H1 (cell line): ENCODE measurements at regions of chr9 and their contacts with region 1.

Region 1: GRCh38 chr9:124357721-124358361 is 57.4 kb downstream of the PSMB7 start:
- DNase-seq: no peak
- H3K4me3 ChIP-seq: no peak overlapping the region
- H3K27ac ChIP-seq: no peak overlapping the region
- H3K4me1 ChIP-seq: no peaks in the 10 kb centered on the region
- H3K27me3 ChIP-seq: no peaks in the 10 kb centered on the region
- CTCF ChIP-seq: peak; percentile 38 to 54 (median 53)
- EP300 ChIP-seq: no peak
- POLR2A ChIP-seq: no peak
- RAD21 ChIP-seq: peak; percentile 49 to 65

Region 2: DNA sequence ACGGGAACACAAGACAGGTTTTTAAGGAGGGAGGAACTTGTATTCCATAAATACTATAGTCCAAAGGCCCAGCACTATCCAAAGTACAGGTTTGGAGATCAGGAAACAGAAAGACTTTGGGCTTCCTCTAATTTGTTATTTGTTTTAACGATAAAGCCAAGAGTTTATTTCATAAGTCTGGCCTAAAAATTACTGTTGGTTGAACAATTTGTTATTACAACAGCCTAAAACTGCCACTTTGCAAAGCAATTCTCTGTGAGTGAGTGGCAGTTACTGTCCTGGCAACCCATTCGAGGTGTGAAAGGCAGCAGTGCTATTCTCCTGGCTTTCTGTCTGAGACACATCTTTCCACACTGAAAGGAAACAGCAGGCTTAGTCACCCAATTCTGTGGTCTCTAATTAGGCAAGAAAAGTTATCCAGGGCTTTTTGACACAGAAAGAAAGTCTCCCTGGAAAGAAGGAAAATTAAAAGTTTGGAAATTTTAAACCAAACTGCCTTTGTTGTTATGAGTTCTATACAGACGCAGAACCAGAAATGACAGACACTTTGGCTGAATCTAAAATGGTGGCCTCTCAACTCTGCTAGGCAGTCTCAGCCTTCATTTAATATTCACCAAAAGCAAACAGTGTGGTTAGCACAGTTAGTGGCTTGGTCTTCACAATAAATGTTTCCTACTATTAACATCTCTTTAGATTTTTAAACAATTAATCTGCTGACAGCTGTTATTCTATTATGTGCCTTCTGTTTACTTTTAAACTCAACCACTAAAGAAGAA is 23.5 kb after region 1 on chr9:
- CTCF ChIA-PET with region 1: interaction called, 10 read pairs
- POLR2A ChIA-PET with region 1: no interaction called
- DNase-seq: no peak
- H3K4me3 ChIP-seq: no peak overlapping the region
- H3K27ac ChIP-seq: no peak overlapping the region
- H3K4me1 ChIP-seq: no peaks in the 10 kb centered on the region
- H3K27me3 ChIP-seq: no peaks in the 10 kb centered on the region
- CTCF ChIP-seq: no peak
- EP300 ChIP-seq: no peak
- POLR2A ChIP-seq: no peak
- RAD21 ChIP-seq: no peak